GM18951 (cell line): ENCODE measurements at regions of chr16 and their contacts with region 1.

Region 1: GRCh38 chr16:22346483-22346882 is 27.9 kb downstream of the CDR2 start:
- POLR2A ChIP-seq: no peak

Region 2: GRCh38 chr16:21158208-21159110 is 1188.0 kb before region 1 on chr16 and contains the start of gene LDAF1:
- in situ Hi-C with region 1: loop called (anchors 25 kb)
- POLR2A ChIP-seq: peak; percentile 56

Region 3: GRCh38 chr16:22397464-22397863 is 51.0 kb after region 1 on chr16:
- in situ Hi-C with region 1: no loop called
- POLR2A ChIP-seq: no peak